Transverse colon (tissue), 4 donors: ENCODE measurements at regions of chr10 and their contacts with region 1.

Region 1: DNA sequence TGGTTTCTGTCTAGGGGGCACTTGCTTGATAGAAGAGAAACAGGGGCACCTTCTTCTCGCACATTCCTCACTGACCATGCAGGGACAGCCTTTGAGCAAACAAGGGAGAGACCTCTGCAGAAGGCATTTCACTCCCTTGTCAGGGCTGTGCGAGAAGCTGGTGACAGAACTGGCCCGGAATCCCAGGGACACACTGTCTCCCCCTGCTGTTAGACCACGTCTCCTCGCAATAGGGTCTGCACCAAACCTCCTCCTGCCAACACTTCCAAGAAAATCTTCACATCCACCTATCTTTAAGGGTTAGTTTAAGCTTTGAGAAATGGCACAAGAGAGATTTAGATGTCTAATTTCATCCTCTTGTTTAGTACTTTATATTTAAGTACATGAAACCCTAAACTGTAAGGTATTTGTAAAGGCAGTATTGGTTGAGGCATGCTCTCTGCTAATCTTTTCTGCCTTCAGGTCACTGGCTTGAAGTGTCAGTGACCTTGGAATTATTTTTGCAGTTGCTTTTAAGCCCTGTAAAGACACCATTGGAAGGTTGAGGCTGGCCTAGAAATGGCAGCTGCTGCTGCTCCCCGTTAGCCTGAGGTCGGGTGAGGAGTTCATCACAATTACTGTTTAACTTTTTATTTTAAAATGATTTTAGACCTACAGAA is 37.0 kb downstream of the RBM20 start:
- DNase-seq: peak; percentile 30
- H3K4me3 ChIP-seq: no peak overlapping the region
- H3K27ac ChIP-seq: no peak overlapping the region
- H3K4me1 ChIP-seq: no peaks in the 10 kb centered on the region
- H3K27me3 ChIP-seq: no peaks in the 10 kb centered on the region
- CTCF ChIP-seq: peak in 4 of 5 experiments; percentile 27 to 41 (median 34)
- EP300 ChIP-seq: no peak
- POLR2A ChIP-seq: no peak

Region 2: GRCh38 chr10:110617425-110618229 is 63.5 kb before region 1 on chr10:
- in situ Hi-C with region 1: no loop called
- intact Hi-C with region 1: loop called (anchors 5 kb)
- DNase-seq: no peak
- H3K4me3 ChIP-seq: no peak overlapping the region
- H3K27ac ChIP-seq: no peak overlapping the region
- H3K4me1 ChIP-seq: no peaks in the 10 kb centered on the region
- H3K27me3 ChIP-seq: no peaks in the 10 kb centered on the region
- CTCF ChIP-seq: no peak
- EP300 ChIP-seq: no peak
- POLR2A ChIP-seq: no peak